ENCODE measurements at regions of chr16 and their contacts with region 1.

Region 1: GRCh38 chr16:31032736-31033708 is at the start of gene STX4:
- DNase-seq: peak; percentile 98 to 99
- ATAC-seq: peak; percentile 92 to 98 (median 96)
- H3K4me3 ChIP-seq: peak within 1 kb of the TSS; percentile 74 to 96 (median 90)
- H3K27ac ChIP-seq: peak within 1 kb of the TSS; percentile 90 to 99 (median 96)
- H3K4me1 ChIP-seq: peaks cover 0 to 40% (median 20%) of the 10 kb centered on the region in 9 donors
- H3K27me3 ChIP-seq: no peaks in the 10 kb centered on the region
- CTCF ChIP-seq: peak in 1 of 9 donors; percentile 13
- total RNA-seq, gene STX4: 31.8 to 53.8 (median 38.6) TPM

Region 2: GRCh38 chr16:30922960-30923535 is 110.0 kb before region 1 on chr16:
- intact Hi-C with region 1: no loop called
- DNase-seq: peak; percentile 99 to 100
- ATAC-seq: peak; percentile 80 to 89 (median 86)
- H3K4me3 ChIP-seq: peak overlapping the region; percentile 57 to 89 (median 73)
- H3K27ac ChIP-seq: peak overlapping the region; percentile 86 to 97 (median 94)
- H3K4me1 ChIP-seq: peaks cover 0 to 24% (median 16%) of the 10 kb centered on the region in 9 donors
- H3K27me3 ChIP-seq: no peaks in the 10 kb centered on the region
- CTCF ChIP-seq: no peak

Region 3: GRCh38 chr16:30957456-30958174 is 75.4 kb before region 1 on chr16 and contains the start of gene SETD1A:
- intact Hi-C with region 1: loop called in 1 of 10 experiments (anchors 5 kb)
- DNase-seq: peak; percentile 96 to 99
- ATAC-seq: peak; percentile 90 to 97 (median 94)
- H3K4me3 ChIP-seq: peak within 1 kb of the TSS; percentile 70 to 99 (median 85)
- H3K27ac ChIP-seq: peak within 1 kb of the TSS; percentile 91 to 100 (median 99)
- H3K4me1 ChIP-seq: peaks cover 6 to 36% (median 29%) of the 10 kb centered on the region in 9 donors
- H3K27me3 ChIP-seq: no peaks in the 10 kb centered on the region
- CTCF ChIP-seq: no peak
- total RNA-seq, gene SETD1A: 7.5 to 11.4 (median 9.2) TPM

Region 4: GRCh38 chr16:30997000-30997886 is 35.8 kb before region 1 on chr16:
- intact Hi-C with region 1: loop called in 2 of 10 experiments (anchors 1 to 5 kb)
- DNase-seq: peak; percentile 74 to 90
- ATAC-seq: peak; percentile 93 to 95 (median 94)
- H3K4me3 ChIP-seq: peak overlapping the region; percentile 38 to 64 (median 60)
- H3K27ac ChIP-seq: peak overlapping the region in 9 of 10 donors; percentile 39 to 88 (median 55)
- H3K4me1 ChIP-seq: peaks cover 4 to 34% (median 16%) of the 10 kb centered on the region in 9 donors
- H3K27me3 ChIP-seq: no peaks in the 10 kb centered on the region
- CTCF ChIP-seq: no peak

Region 5: DNA sequence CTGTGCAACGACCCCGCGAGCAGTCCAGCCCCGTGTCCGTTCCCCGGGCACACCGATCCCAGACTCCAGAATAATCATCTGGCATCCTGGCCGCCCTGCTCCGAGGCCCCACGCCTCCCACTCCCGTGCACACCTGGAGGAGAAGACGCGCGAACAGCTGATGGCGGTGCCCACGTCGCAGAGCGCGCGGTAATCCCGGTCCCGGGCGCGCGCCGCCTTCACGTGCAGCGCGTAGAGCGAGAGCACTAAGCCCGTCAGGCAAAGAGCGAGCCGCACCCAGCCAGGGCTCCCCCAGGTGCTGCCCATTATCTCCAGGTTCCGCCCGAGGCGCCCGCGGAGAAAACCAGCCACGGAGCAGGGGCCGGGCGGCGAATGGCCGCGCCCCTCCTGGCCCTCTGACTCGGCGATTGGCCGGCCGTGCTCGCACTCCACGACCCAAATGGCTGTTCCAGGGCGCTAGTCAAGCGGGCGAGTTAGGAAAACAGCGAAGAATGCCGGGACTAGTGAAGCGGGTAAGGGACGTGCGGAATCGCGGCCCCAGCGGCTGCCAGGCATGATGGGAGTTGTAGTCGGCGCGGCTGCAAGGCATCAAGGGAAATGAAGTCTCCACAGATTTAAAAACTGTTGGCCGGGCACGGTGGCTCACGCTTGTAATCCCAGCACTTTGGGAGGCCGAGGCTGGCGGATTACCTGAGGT is 61.5 kb after region 1 on chr16 and contains the start of gene VKORC1:
- intact Hi-C with region 1: loop called in 1 of 10 experiments (anchors 5 kb)
- DNase-seq: peak; percentile 93 to 96
- ATAC-seq: peak; percentile 95 to 98 (median 96)
- H3K4me3 ChIP-seq: peak within 1 kb of the TSS; percentile 76 to 98 (median 88)
- H3K27ac ChIP-seq: peak within 1 kb of the TSS; percentile 51 to 93 (median 86)
- H3K4me1 ChIP-seq: peaks cover 0 to 30% (median 20%) of the 10 kb centered on the region in 9 donors
- H3K27me3 ChIP-seq: no peaks in the 10 kb centered on the region
- CTCF ChIP-seq: peak in 1 of 9 donors; percentile 12
- total RNA-seq, gene VKORC1: 27.0 to 68.1 (median 31.8) TPM

Measured in heart right ventricle (tissue), 16 donors.